Dorsolateral prefrontal cortex (tissue), 120 donors: ENCODE measurements at regions of chr11 and their contacts with region 1.

Region 1: GRCh38 chr11:112280268-112281126 is 19.8 kb upstream of the PLET1 start:
- DNase-seq: peak; percentile 24 to 78 (median 64)
- H3K4me3 ChIP-seq: peak overlapping the region; percentile 36 to 79 (median 62)
- H3K27ac ChIP-seq: peak overlapping the region in 50 of 59 donors; percentile 16 to 88 (median 70)
- H3K27me3 ChIP-seq: no peaks in the 10 kb centered on the region
- CTCF ChIP-seq: peak; percentile 36 to 80 (median 69)

Region 2: DNA sequence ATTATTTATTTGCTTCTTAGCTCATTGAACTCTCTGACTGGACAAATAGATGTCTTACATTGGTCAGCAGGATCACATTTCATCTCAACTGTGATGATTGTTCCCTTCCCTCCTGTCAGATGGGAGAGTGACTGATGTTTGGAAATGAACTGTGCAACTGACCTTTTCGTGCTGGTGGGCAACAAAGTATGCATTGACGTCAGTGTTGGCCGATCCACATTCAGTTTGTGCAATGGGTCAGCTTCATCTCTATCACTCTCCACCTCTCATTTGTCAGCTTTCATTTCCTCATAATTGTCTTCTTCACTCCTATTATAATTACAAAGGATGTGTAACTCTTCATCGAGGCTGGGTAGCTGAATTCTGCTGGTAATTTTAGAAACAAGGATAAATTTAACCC is 585.6 kb before region 1 on chr11:
- intact Hi-C with region 1: no loop called
- DNase-seq: no peak
- H3K4me3 ChIP-seq: peak overlapping the region in 2 of 59 donors; percentile 0 to 15
- H3K27ac ChIP-seq: peak overlapping the region in 48 of 59 donors; percentile 2 to 78 (median 47)
- H3K27me3 ChIP-seq: no peaks in the 10 kb centered on the region
- CTCF ChIP-seq: no peak

Region 3: DNA sequence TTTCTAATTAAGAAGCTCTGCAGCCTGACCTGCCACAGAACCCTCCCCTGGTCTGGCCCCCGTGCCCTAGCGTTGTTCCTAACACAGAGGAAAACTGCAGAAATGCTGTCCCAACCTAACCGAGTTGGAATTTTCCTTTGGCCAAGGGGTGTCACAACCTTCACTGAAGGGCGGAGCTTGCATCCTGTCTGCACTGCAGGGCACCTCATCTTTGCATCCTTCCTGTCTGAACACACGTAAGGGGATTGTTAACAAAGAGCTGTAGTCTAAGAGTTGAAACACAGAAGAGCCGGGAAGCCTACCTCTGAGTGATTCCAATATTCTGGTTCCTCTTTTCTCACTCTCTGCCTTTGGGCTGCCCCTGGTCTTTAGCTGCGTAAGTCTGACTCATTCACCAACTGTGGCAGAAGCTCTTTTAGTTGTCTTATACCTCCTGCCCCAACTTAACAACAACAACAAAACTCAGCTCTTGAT is 341.8 kb before region 1 on chr11:
- intact Hi-C with region 1: loop called in 1 of 2 experiments (anchors 10 kb)
- DNase-seq: peak in 1 of 10 donors; percentile 75
- H3K4me3 ChIP-seq: peak overlapping the region in 54 of 59 donors; percentile 7 to 86 (median 70)
- H3K27ac ChIP-seq: peak overlapping the region; percentile 51 to 96 (median 92)
- H3K27me3 ChIP-seq: no peaks in the 10 kb centered on the region
- CTCF ChIP-seq: peak in 1 of 56 donors; percentile 7

Region 4: GRCh38 chr11:112113539-112114457 is 166.7 kb before region 1 on chr11:
- intact Hi-C with region 1: loop called (anchors 5 to 10 kb)
- DNase-seq: no peak
- H3K4me3 ChIP-seq: peak overlapping the region in 12 of 59 donors; percentile 4 to 43 (median 16)
- H3K27ac ChIP-seq: peak overlapping the region in 4 of 59 donors; percentile 2 to 32 (median 18)
- H3K27me3 ChIP-seq: no peaks in the 10 kb centered on the region
- CTCF ChIP-seq: peak; percentile 51 to 82 (median 73)

Region 5: DNA sequence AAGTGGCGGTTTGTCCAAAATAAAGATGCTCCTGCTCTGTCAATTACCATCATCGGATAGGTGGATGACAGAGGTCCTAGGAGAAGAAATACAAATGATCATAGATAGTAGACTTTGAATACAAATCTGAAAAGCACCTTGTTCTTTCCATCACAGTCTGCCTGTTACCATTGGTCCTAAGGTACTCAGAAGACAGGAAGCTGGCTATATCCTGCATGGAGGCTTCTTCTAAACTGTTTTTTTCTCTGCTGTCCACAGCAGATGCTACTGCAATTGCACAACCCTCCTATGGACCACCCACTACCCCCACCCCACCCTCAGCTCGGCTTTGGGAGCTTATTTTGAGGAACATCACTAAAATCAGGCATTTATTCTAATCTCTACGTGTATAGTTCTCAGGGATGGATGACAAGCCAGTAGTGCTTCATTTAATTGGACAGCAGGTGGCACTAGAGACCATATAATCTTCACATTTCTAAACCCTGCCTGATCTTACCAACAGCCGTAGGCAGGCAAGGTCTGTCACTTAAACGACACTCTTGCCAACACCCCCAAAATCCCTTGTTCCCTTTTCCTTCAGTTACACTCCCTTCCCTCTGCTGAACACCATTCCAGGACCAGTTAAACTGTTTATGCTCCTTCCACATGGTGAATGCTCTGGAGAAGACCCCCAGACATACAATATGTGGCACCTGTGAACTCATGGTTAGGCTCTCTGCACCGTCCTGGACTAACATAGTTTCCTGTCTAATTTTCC is 60.8 kb before region 1 on chr11:
- intact Hi-C with region 1: loop called (anchors 1 kb)
- DNase-seq: peak in 2 of 10 donors; percentile 38 to 50
- H3K4me3 ChIP-seq: no peak overlapping the region
- H3K27ac ChIP-seq: peak overlapping the region in 13 of 59 donors; percentile 4 to 63 (median 36)
- H3K27me3 ChIP-seq: no peaks in the 10 kb centered on the region
- CTCF ChIP-seq: peak; percentile 56 to 92 (median 82)

Region 6: GRCh38 chr11:112226062-112226830 is 54.3 kb before region 1 on chr11 and contains the start of gene PTS:
- intact Hi-C with region 1: loop called (anchors 1 to 2 kb)
- DNase-seq: peak; percentile 69 to 94 (median 82)
- H3K4me3 ChIP-seq: peak within 1 kb of the TSS; percentile 56 to 97 (median 87)
- H3K27ac ChIP-seq: peak within 1 kb of the TSS; percentile 80 to 100 (median 99)
- H3K27me3 ChIP-seq: no peaks in the 10 kb centered on the region
- CTCF ChIP-seq: peak in 19 of 56 donors; percentile 4 to 43 (median 23)
- total RNA-seq, gene PTS: 20.4 to 52.7 (median 39.5) TPM

Region 7: DNA sequence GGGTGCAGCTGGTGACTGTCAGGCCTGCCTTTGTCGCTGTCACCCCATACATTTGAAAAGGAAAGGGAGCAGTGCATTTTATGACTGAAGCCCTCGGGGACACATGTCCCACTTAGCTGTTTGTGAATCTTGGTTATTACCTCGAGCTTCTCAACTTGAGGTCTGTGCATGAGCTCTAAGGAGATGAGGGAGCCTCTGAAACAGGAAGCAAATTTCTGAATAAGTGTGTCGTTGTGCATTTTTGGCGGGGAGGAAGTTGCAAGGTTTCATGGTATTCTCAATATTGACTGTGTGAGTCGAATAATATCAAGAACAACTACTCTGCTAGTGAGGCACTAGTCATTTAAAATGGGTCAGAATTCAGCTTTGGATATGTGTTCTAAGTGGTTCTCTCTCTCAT is 129.8 kb after region 1 on chr11:
- intact Hi-C with region 1: no loop called
- DNase-seq: no peak
- H3K4me3 ChIP-seq: no peak overlapping the region
- H3K27ac ChIP-seq: no peak overlapping the region
- H3K27me3 ChIP-seq: peaks cover 0 to 6% (median 0%) of the 10 kb centered on the region in 45 donors
- CTCF ChIP-seq: no peak